CD14-positive monocyte (primary cell): ENCODE measurements at regions of chr4 and their contacts with region 1.

Region 1: DNA sequence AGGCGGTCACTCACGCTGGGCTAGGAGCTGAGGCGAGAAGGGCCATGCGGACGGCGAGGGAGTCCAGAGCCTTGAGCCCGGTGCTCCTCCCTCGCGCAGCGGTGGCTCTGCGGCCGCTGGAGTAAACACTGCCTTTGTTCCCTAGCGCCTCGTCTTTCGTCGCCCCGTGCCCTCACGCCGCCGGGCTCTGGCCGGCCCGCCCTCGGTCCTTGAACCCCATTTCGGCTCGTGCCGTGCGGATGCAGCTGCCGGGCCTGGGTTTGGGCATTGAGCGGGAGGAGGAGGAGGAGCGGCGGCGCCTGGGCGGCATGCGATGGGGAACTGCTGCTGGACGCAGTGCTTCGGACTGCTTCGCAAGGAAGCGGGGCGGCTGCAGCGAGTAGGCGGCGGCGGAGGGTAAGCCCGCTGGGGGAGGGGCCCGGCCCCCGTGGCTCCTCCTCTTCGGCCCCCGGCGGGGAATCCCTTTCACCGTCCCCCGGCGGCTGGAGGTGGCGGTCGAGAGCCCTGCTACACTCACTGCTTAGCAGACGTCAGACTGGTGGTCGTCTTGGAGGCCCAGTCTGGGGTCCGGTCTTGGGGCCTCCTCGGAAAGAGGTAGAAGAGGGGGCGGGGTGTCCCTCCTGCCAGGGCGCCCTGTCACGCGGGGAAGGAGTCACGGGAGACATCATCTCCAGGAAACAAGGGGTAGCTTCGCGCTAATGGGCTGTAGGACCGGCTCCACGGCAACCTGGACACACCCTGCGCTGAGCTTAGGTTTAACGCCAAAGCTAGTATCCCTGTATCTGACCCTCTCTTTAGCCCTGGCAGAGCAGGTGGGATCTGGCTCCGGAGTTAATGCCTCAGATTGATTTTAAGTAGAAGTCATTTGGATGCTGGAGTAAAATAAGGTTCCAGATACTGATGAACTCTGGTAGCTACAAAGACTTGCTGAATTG is at the start of gene AP1AR:
- DNase-seq: peak; percentile 71 to 83 (median 81)
- H3K4me3 ChIP-seq: peak within 1 kb of the TSS; percentile 71 to 90 (median 83)
- H3K4me3 Mint-ChIP-seq: peak within 1 kb of the TSS; percentile 93 to 99
- H3K27ac ChIP-seq: peak within 1 kb of the TSS; percentile 99
- H3K27ac Mint-ChIP-seq: peak within 1 kb of the TSS; percentile 98 to 100 (median 99)
- H3K4me1 ChIP-seq: peaks cover 20% of the 10 kb centered on the region in 2 donors
- H3K4me1 Mint-ChIP-seq: peaks cover 19% of the 10 kb centered on the region
- H3K27me3 ChIP-seq: no peaks in the 10 kb centered on the region
- H3K27me3 Mint-ChIP-seq: peaks cover 0 to 2% (median 2%) of the 10 kb centered on the region in 3 donors
- CTCF ChIP-seq: no peak
- polyA plus RNA-seq, gene AP1AR: 6.1 to 15.8 (median 14.6) TPM

Region 2: GRCh38 chr4:112099701-112100297 is 132.2 kb before region 1 on chr4:
- intact Hi-C with region 1: loop called (anchors 2 to 5 kb)
- DNase-seq: peak; percentile 22 to 54 (median 34)
- H3K4me3 ChIP-seq: no peak overlapping the region
- H3K4me3 Mint-ChIP-seq: no peak overlapping the region
- H3K27ac ChIP-seq: no peak overlapping the region
- H3K27ac Mint-ChIP-seq: no peak overlapping the region
- H3K4me1 ChIP-seq: peaks cover 0 to 4% of the 10 kb centered on the region in 2 donors
- H3K4me1 Mint-ChIP-seq: peaks cover 13% of the 10 kb centered on the region
- H3K27me3 ChIP-seq: no peaks in the 10 kb centered on the region
- H3K27me3 Mint-ChIP-seq: peaks cover 0 to 3% (median 2%) of the 10 kb centered on the region in 3 donors
- CTCF ChIP-seq: peak; percentile 82

Region 3: DNA sequence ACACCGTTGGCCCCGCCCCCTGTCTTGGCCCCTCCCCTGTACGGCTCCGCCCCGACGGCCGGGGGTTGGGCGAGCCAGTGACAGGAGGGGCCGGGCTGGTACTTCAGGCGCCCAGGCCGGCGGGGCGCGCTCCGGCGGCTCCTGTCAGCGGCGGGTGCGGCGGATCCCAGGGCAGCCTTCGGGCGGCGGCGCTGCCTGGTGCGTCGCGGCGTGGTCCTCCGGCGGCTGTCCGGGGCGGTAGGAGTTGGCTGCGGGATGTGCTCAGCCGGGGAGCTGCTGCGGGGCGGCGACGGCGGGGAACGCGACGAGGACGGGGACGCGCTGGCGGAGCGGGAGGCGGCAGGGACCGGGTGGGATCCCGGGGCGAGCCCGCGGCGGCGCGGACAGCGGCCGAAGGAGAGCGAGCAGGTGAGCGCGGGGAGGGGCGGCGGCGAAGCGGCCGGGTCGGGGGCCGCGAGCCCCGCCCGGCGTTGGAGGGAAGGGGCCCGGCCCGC is 86.7 kb before region 1 on chr4 and contains the start of gene FAM241A:
- intact Hi-C with region 1: loop called (anchors 2 to 10 kb)
- DNase-seq: peak; percentile 71 to 76 (median 73)
- H3K4me3 ChIP-seq: peak within 1 kb of the TSS; percentile 90 to 100 (median 100)
- H3K4me3 Mint-ChIP-seq: peak within 1 kb of the TSS; percentile 97
- H3K27ac ChIP-seq: peak within 1 kb of the TSS; percentile 93 to 95
- H3K27ac Mint-ChIP-seq: peak within 1 kb of the TSS; percentile 91 to 96 (median 95)
- H3K4me1 ChIP-seq: peaks cover 16 to 32% of the 10 kb centered on the region in 2 donors
- H3K4me1 Mint-ChIP-seq: peaks cover 37% of the 10 kb centered on the region
- H3K27me3 ChIP-seq: no peaks in the 10 kb centered on the region
- H3K27me3 Mint-ChIP-seq: peaks cover 0 to 5% (median 0%) of the 10 kb centered on the region in 3 donors
- CTCF ChIP-seq: no peak
- polyA plus RNA-seq, gene FAM241A: 1.8 to 5.5 (median 4.8) TPM

Region 4: GRCh38 chr4:112189754-112190153 is 42.3 kb before region 1 on chr4:
- intact Hi-C with region 1: no loop called
- DNase-seq: no peak
- H3K4me3 ChIP-seq: no peak overlapping the region
- H3K4me3 Mint-ChIP-seq: no peak overlapping the region
- H3K27ac ChIP-seq: no peak overlapping the region
- H3K27ac Mint-ChIP-seq: no peak overlapping the region
- H3K4me1 ChIP-seq: peaks cover 16 to 17% of the 10 kb centered on the region in 2 donors
- H3K4me1 Mint-ChIP-seq: peaks cover 21% of the 10 kb centered on the region
- H3K27me3 ChIP-seq: no peaks in the 10 kb centered on the region
- H3K27me3 Mint-ChIP-seq: no peaks in the 10 kb centered on the region
- CTCF ChIP-seq: no peak